MCF 10A (cell line): ENCODE measurements at regions of chr11 and their contacts with region 1.

Region 1: DNA sequence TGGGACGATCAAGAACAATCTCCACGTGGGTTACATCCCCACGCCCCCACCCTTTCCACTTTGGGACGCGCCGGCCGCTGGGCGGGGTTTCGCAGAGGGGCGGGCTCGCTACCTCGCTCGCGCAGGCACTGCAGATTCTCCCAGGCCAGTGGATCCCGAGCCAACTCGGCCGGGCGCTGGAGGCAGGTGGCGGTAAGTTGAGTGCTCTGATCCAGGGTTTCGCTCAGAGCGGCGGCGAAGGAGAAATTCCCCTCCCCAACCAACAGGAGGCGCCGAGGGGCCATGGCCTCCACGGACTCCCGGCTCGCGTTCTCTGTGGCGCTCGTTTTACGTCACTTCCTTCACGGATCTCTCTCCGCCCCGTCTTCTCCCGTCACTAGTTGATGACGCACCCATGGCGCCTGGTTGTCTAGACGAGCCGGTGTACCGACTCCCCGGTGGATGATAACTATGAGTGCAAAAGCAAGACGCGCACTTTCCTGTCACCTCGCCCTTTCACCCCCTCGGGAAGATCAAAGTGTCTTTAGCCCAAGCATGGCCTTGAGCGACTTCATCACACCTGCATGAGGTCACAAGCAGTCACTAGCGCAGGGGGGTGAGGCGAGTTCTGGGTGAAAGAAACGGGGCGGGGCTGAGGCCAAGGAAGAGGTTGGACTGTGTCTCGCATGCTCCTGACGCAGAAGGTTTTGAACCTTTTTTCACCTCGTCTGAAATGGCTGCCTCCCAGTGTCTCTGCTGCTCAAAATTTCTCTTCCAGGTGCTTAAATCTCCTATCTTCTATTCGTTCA is at the starts of genes CFAP68 and FDXACB1:
- DNase-seq: peak; percentile 98
- H3K4me3 Mint-ChIP-seq: peak within 1 kb of the TSS; percentile 95
- H3K27ac Mint-ChIP-seq: peak within 1 kb of the TSS; percentile 97
- H3K4me1 Mint-ChIP-seq: peaks cover 6% of the 10 kb centered on the region
- H3K27me3 Mint-ChIP-seq: no peaks in the 10 kb centered on the region
- CTCF ChIP-seq: peak; percentile 94
- total RNA-seq, gene CFAP68: 33.6 and 38.3 TPM in 2 replicates
- total RNA-seq, gene FDXACB1: 0.79 and 1.0 TPM in 2 replicates

Region 2: DNA sequence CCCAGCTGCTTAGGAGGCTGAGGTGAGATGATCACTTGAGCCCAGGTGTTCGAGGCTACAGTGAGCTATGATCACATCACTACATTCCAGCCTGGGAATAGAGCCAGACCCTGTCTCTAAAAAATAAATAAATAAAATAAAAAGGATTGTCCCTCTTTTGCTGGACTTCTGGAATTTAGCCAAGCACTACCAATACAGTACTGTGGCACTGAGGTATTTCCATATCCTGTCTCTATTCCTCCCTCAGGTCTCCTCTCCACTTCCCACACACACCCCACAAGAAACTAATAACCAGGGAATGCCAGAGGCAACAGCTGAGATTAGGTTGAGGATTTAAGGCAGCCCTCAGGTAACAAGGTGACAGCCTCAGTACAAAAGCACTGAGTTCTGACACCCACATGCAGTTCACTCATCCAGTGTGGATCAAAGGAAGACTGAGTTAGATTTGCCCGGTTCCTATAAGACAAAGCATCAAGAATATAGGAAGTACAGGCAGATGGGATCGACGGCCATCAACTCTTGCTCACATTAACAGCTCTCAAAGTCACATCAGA is 108.4 kb before region 1 on chr11:
- CTCF ChIA-PET with region 1: no interaction called
- POLR2A ChIA-PET with region 1: no interaction called
- intact Hi-C with region 1: no loop called
- DNase-seq: no peak
- H3K4me3 Mint-ChIP-seq: no peak overlapping the region
- H3K27ac Mint-ChIP-seq: no peak overlapping the region
- H3K4me1 Mint-ChIP-seq: peaks cover 13% of the 10 kb centered on the region
- H3K27me3 Mint-ChIP-seq: no peaks in the 10 kb centered on the region
- CTCF ChIP-seq: no peak

Region 3: GRCh38 chr11:111860257-111860656 is 18.8 kb before region 1 on chr11:
- CTCF ChIA-PET with region 1: no interaction called
- POLR2A ChIA-PET with region 1: no interaction called
- intact Hi-C with region 1: no loop called
- DNase-seq: no peak
- H3K4me3 Mint-ChIP-seq: no peak overlapping the region
- H3K27ac Mint-ChIP-seq: no peak overlapping the region
- H3K4me1 Mint-ChIP-seq: no peaks in the 10 kb centered on the region
- H3K27me3 Mint-ChIP-seq: no peaks in the 10 kb centered on the region
- CTCF ChIP-seq: no peak

Region 4: DNA sequence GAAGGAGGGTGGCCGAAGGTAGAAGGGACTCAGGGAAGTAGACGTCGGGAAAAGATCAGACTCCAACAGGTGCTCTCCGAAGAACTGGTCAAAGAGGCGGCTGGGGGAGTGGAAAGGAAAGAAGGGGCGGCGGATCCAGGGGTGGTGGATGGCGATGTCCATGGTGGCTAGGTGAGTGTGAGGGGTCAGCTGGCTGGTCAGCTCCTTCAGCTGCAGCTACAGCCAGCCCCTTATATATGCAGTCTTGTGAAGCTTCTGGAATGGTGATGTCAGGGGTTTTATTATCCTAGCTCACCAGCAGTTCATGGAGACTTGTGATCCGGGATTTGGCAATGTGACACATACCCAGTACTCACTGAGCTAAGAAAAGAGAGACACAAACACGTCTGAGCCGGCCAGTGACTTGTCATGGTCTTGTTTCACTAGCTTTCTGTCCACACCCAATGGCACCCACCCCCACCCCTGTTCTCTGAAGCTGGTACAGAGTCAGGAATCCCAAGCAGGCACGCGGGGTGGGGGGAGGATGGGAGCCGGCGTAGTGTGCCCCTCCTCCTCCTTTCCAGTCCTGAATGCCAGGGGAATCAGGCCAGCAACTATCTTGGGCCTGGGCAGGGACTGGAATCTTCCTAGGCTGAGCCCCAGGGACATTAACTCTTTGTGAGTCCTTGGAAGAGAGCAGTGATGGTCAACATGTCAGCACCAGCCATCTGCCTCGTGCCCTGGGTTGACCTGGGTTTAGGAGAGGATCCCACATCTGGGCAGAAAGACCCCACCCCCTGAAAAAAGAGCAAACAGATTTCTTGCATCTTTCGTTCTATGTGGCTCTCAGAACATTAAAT is 32.7 kb after region 1 on chr11 and contains the start of gene CRYAB:
- CTCF ChIA-PET with region 1: interaction called, 6 read pairs
- POLR2A ChIA-PET with region 1: interaction called, 41 read pairs
- intact Hi-C with region 1: no loop called
- DNase-seq: peak; percentile 61
- H3K4me3 Mint-ChIP-seq: peak within 1 kb of the TSS; percentile 41
- H3K27ac Mint-ChIP-seq: peak within 1 kb of the TSS; percentile 86
- H3K4me1 Mint-ChIP-seq: peaks cover 18% of the 10 kb centered on the region
- H3K27me3 Mint-ChIP-seq: no peaks in the 10 kb centered on the region
- CTCF ChIP-seq: no peak
- total RNA-seq, gene CRYAB: 1.2 and 2.5 TPM in 2 replicates

Region 5: GRCh38 chr11:111918390-111919258 is 39.6 kb after region 1 on chr11 and contains the start of gene C11orf52:
- CTCF ChIA-PET with region 1: interaction called, 6 read pairs
- POLR2A ChIA-PET with region 1: interaction called, 41 read pairs
- intact Hi-C with region 1: loop called (anchors 2 kb)
- DNase-seq: peak; percentile 76
- H3K4me3 Mint-ChIP-seq: peak within 1 kb of the TSS; percentile 68
- H3K27ac Mint-ChIP-seq: peak within 1 kb of the TSS; percentile 68
- H3K4me1 Mint-ChIP-seq: peaks cover 21% of the 10 kb centered on the region
- H3K27me3 Mint-ChIP-seq: no peaks in the 10 kb centered on the region
- CTCF ChIP-seq: no peak
- total RNA-seq, gene C11orf52: 1.3 and 2.0 TPM in 2 replicates

Region 6: GRCh38 chr11:111938687-111939160 is 59.7 kb after region 1 on chr11:
- CTCF ChIA-PET with region 1: interaction called, 6 read pairs
- POLR2A ChIA-PET with region 1: interaction called, 10 read pairs
- intact Hi-C with region 1: loop called (anchors 2 kb)
- DNase-seq: peak; percentile 67
- H3K4me3 Mint-ChIP-seq: peak overlapping the region; percentile 71
- H3K27ac Mint-ChIP-seq: peak overlapping the region; percentile 8
- H3K4me1 Mint-ChIP-seq: peaks cover 60% of the 10 kb centered on the region
- H3K27me3 Mint-ChIP-seq: no peaks in the 10 kb centered on the region
- CTCF ChIP-seq: no peak

Region 7: DNA sequence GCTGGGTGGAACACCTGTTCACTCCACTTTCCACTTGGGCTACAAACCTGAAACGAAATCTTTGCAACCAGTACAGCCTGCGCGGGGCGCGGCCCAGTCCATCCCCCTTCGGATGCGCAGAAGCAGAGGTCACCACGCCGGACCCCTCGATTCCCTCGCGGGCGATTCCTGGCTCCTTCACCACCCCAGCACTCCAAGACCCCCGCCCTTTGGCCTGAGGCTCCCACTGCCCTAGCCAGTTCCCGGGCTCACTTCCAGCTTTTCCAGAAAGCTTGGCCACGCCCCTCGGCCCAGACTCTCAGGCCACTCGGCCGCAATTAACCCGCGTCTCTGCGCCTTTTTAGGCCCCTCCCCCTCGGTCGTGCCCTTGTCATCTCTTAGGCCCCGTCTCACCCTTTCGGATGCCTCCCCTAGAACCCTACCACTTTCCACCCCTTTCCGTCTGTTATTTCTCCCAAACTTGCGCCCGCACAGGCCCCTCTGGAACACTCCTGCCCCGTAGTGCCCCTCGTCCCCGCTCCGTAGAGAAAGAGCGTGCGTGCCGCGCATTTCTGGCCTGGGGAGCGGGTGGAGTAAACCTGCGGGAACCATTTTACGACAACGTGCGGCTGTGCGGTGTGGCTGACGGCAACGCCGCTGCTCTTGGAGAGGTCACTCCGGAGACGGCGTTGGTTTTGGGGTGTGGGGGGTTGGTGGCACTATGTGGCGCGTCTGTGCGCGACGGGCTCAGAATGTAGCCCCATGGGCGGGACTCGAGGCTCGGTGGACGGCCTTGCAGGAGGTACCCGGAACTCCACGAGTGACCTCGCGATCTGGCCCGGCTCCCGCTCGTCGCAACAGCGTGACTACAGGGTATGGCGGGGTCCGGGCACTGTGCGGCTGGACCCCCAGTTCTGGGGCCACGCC is 146.0 kb after region 1 on chr11 and contains the start of gene DLAT:
- CTCF ChIA-PET with region 1: no interaction called
- POLR2A ChIA-PET with region 1: interaction called, 7 read pairs
- intact Hi-C with region 1: loop called (anchors 1 kb)
- DNase-seq: peak; percentile 88
- H3K4me3 Mint-ChIP-seq: peak within 1 kb of the TSS; percentile 91
- H3K27ac Mint-ChIP-seq: peak within 1 kb of the TSS; percentile 95
- H3K4me1 Mint-ChIP-seq: peaks cover 7% of the 10 kb centered on the region
- H3K27me3 Mint-ChIP-seq: no peaks in the 10 kb centered on the region
- CTCF ChIP-seq: no peak
- total RNA-seq, gene DLAT: 43.3 and 46.7 TPM in 2 replicates

Region 8: GRCh38 chr11:112074026-112074811 is 195.2 kb after region 1 on chr11 and contains the start of gene NKAPD1:
- CTCF ChIA-PET with region 1: interaction called, 3 read pairs
- POLR2A ChIA-PET with region 1: no interaction called
- intact Hi-C with region 1: loop called (anchors 2 kb)
- DNase-seq: peak; percentile 82
- H3K4me3 Mint-ChIP-seq: peak within 1 kb of the TSS; percentile 82
- H3K27ac Mint-ChIP-seq: peak within 1 kb of the TSS; percentile 99
- H3K4me1 Mint-ChIP-seq: peaks cover 26% of the 10 kb centered on the region
- H3K27me3 Mint-ChIP-seq: no peaks in the 10 kb centered on the region
- CTCF ChIP-seq: no peak
- total RNA-seq, gene NKAPD1: 25.1 and 27.5 TPM in 2 replicates